ENCODE measurements at regions of chr1 and their contacts with region 1.

Region 1: GRCh38 chr1:209723756-209724693 is 19.4 kb downstream of the HSD11B1 start:
- DNase-seq: peak; percentile 80
- H3K4me3 Mint-ChIP-seq: peak overlapping the region; percentile 49
- H3K27ac Mint-ChIP-seq: peak overlapping the region; percentile 99
- H3K4me1 Mint-ChIP-seq: peaks cover 70% of the 10 kb centered on the region
- H3K27me3 Mint-ChIP-seq: no peaks in the 10 kb centered on the region

Region 2: GRCh38 chr1:209704584-209704983 is 19.4 kb before region 1 on chr1 and contains the start of gene HSD11B1:
- CTCF ChIA-PET with region 1: interaction called, 5 read pairs
- intact Hi-C with region 1: loop called (anchors 1 kb)
- DNase-seq: no peak
- H3K4me3 Mint-ChIP-seq: peak within 1 kb of the TSS; percentile 58
- H3K27ac Mint-ChIP-seq: peak within 1 kb of the TSS; percentile 94
- H3K4me1 Mint-ChIP-seq: peaks cover 81% of the 10 kb centered on the region
- H3K27me3 Mint-ChIP-seq: no peaks in the 10 kb centered on the region
- total RNA-seq, gene HSD11B1: 6.7 to 8.0 TPM

Region 3: GRCh38 chr1:209710093-209710492 is 13.9 kb before region 1 on chr1:
- CTCF ChIA-PET with region 1: interaction called, 3 read pairs
- intact Hi-C with region 1: loop called (anchors 1 kb)
- DNase-seq: peak; percentile 51
- H3K4me3 Mint-ChIP-seq: peak overlapping the region; percentile 41
- H3K27ac Mint-ChIP-seq: peak overlapping the region; percentile 94
- H3K4me1 Mint-ChIP-seq: peaks cover 77% of the 10 kb centered on the region
- H3K27me3 Mint-ChIP-seq: no peaks in the 10 kb centered on the region